ENCODE measurements at regions of chr12 and their contacts with region 1.

Region 1: DNA sequence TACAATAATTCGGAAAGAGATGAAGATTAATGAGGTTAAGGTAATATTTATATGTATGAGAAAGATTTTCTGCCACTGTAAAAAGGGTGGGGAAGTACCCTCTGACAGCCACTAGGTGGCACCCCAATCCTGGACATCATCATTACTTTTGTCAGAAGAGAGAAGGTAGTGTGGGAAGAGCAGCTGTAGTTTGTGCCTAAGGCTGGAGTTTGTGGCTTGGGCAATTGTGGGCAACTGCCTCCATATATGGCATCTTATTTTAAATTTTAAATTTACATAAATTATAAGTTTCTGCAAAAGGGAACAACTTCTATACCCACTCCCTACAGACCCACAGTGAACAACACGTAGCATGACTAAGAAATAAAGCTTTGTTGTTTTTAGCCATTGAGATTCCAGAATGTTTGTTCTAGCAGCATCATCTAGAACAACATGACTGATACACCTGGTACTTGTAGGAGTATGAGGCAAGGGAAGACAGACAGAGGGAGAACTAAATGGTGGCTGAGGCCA is 34.4 kb upstream of the SYCP3 start:
- DNase-seq: peak; percentile 89
- H3K4me3 Mint-ChIP-seq: no peak overlapping the region
- H3K27ac Mint-ChIP-seq: no peak overlapping the region
- H3K4me1 Mint-ChIP-seq: peaks cover 24% of the 10 kb centered on the region
- H3K27me3 Mint-ChIP-seq: no peaks in the 10 kb centered on the region

Region 2: GRCh38 chr12:101414533-101415119 is 359.1 kb before region 1 on chr12:
- intact Hi-C with region 1: loop called (anchors 2 kb)
- DNase-seq: peak; percentile 74
- H3K4me3 Mint-ChIP-seq: no peak overlapping the region
- H3K27ac Mint-ChIP-seq: no peak overlapping the region
- H3K4me1 Mint-ChIP-seq: no peaks in the 10 kb centered on the region
- H3K27me3 Mint-ChIP-seq: peaks cover 22% of the 10 kb centered on the region

Region 3: DNA sequence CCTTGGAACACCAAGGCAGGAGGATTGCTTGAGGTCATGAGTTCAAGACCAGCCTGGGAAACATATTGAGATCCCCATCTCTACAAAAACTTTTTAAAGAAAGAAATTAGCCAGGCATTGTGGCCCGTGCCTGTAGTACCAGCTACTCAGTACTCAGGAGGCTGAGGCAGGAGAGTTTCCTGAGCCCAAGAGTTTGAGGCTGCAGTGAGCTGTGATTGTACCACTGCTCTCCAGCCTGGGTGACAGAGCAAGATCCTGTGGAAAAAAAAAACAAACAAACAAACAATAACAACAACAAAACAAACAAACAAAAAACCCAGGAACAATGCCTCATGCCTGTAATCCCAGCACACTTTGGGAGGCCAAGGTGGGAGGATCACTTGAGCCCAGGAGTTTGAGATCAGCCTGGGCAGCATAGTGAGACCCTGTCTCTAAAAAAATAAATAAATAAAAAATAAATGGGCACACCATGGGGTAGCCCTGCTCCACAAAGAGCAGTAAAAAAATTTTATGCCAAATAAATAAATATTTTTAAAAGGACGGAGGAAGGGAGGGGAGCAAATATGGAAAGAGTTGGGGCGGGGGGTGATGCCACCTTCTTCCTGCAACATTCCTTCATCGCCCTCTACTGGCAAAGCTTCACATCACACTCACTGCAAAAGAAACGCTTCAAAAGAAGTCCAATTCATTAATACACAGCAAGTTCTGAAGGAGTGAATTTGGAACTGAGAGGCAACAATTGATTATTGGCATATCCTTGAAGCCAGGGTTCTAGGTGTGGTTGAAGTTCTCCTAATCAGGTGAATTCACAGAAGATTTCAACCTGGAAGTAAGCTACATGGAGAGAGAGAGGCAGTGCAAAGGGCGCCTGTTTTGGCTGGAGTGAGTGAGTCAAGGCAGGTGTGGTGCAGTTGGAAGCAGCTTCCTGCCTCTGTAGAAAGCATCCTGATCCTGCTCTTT is 65.9 kb after region 1 on chr12:
- intact Hi-C with region 1: loop called (anchors 1 kb)
- DNase-seq: peak; percentile 92
- H3K4me3 Mint-ChIP-seq: no peak overlapping the region
- H3K27ac Mint-ChIP-seq: no peak overlapping the region
- H3K4me1 Mint-ChIP-seq: peaks cover 8% of the 10 kb centered on the region
- H3K27me3 Mint-ChIP-seq: peaks cover 6% of the 10 kb centered on the region